ENCODE measurements at regions of chr7 and their contacts with region 1.

Region 1: DNA sequence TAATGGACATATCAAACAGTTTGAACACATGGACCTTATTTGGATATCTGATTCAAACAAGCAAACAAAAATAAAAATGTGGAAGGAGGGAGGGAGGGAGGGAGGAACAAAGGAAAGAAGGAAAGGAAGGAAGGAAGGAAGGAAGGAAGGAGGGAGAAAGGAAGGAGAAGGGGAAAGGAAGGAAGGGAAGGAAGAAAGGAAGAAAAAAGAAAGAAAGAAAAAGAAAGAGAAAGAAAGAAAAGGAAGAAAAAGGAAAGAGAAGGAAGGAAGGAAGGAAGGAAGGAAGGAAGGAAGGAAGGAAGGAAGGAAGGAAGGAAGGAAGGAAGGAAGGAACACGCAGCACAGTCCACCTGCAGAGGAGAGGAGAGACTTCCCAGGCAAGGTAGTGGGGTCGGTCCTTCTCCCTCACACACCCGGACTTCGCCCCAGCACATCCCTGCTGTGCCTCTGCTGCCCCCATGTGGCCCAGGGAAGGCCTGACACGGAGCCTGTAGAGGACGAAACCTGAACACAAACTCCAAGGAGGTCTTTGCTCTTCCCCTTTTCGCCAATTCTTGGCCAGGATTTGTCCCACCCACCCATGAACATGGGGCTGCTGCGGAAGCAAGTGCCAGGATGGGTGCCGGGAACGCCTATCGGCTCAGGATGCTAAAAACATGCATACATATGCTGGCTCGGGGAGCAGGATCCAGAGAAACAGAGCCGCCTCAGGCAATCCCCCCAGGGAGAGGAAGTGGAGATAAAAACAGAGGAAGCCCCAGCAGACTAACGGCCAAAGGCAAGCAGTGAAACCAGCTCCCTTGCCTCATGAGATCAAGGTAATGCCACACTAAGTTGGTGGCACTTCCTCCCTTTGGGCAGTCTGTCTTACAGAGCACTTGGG is 52.3 kb upstream of the DGKI start:
- DNase-seq: peak; percentile 73
- CTCF ChIP-seq: peak; percentile 97

Region 2: DNA sequence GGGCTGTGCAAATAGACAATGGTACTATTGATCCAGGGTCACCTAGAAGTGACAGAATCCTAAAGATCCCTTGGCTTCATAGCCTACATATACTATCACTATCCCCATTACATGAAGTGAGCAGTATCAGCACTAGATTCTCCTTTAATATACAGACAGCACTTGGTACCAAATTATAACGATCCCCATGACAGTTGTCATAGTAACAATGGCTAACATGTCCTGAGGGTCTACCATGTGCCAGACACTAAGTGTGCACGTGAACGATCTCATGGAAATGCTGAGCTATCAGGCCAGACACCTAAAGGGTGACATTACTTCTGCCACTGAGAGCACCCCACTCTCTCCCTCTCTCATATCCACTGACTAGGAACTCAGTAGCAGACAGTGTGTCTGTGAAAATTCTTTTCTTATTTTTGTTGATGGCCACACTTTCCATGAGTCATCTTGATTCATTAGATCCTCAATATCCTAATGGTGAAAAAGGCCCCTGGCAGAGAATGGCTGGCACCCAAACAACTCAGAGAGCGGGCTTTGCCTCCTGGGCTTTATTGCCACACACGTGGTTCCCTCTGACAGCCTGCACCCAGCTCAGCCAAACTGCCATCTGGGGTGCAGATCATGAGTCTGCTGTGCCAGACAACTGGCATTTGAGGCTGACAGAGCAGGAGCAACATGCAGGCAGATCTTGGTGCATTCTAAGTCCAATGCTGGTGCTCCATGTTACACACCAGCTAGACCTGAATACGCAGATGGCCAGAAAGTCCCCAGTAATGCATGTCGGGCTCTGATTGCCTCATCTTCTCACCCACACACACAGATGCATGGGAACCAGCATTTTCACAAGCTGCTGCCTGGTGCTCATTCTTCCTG is 228.6 kb before region 1 on chr7:
- CTCF ChIA-PET with region 1: interaction called, 10 read pairs
- POLR2A ChIA-PET with region 1: no interaction called
- DNase-seq: peak; percentile 45
- CTCF ChIP-seq: no peak

Region 3: DNA sequence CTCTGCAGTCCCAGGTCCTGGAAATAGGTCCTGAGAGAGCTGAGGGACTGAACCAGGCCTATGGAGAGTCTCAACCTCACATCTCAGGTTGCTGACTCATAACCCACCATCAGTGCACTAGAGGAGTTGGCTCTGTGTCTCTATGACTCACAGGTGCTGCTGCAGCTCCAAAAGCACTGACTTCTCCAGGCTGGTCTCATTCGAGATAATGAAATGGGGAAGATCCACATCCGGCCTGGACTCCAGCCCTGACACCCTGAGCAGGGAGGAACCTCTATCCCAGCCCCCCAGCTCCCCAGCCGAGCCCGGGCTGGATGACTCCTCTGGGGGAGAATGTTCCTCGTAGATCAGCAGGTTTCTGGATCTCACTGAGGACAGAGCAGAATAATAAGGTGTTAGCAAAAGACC is 16.8 kb before region 1 on chr7:
- CTCF ChIA-PET with region 1: interaction called, 21 read pairs
- POLR2A ChIA-PET with region 1: no interaction called
- DNase-seq: peak; percentile 70
- CTCF ChIP-seq: no peak

Region 4: DNA sequence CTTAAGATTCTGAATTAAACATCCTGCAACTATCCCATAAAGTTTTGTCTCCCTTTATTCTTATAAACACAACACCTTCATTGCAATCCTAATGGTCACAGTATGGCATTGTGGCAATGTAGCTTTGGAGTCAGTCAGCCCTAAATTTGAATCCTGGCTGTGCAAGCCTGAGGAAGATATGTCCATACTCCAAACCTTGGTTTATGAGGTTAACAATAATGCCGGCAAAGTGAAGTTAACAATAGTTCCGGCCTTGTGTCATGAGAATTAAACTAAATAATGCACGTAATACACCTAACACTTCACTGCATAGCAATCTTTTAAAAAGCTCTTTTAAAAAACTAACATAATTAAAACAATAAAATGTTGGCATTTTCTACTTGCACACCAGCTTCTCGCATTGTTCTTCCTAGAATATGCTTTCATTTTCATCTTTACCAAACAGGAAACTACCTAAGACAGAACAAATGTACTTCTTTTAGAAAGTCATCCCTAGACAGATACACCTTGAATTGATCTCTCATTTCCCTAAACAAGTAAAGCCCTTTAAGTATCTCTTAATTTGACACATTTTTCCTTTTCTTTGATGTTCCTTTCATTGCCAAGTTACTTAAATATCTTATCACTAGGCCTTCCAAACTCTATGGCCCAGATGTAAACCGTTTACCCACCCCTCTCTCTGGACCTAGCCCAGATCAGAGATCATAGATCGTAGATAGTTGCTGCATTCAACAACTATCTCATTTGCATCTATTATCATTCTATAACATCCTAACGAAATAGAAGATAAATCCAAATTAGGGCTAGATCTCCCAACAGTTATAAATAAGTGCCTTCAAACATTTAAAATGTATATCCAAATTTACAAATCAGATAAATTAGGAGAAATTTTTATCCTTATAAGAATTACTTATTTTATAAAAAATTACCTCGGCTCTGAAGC is 36.1 kb after region 1 on chr7:
- CTCF ChIA-PET with region 1: interaction called, 12 read pairs
- POLR2A ChIA-PET with region 1: no interaction called
- DNase-seq: peak; percentile 54
- CTCF ChIP-seq: no peak

Region 5: GRCh38 chr7:138015096-138015495 is 116.0 kb after region 1 on chr7:
- CTCF ChIA-PET with region 1: interaction called, 494 read pairs
- POLR2A ChIA-PET with region 1: no interaction called
- DNase-seq: no peak
- CTCF ChIP-seq: no peak